Activated CD8-positive, alpha-beta memory T cell treated with anti-CD3 and anti-CD28 coated beads, Interleukin-2, amount 10 ng/mL, durations not matched to agents 7 days and 5 days (primary cell): ENCODE measurements at regions of chr10 and their contacts with region 1.

Region 1: GRCh38 chr10:103416436-103417147 is 20.2 kb downstream of the PDCD11 start:
- DNase-seq: peak; percentile 81
- ATAC-seq: peak; percentile 69
- H3K4me3 Mint-ChIP-seq: no peak overlapping the region
- H3K27ac Mint-ChIP-seq: peak overlapping the region; percentile 59
- H3K4me1 Mint-ChIP-seq: peaks cover 2% of the 10 kb centered on the region
- H3K27me3 Mint-ChIP-seq: no peaks in the 10 kb centered on the region

Region 2: GRCh38 chr10:103396064-103396788 is 20.4 kb before region 1 on chr10 and contains the starts of genes ATP5MK and PDCD11:
- CTCF ChIA-PET with region 1: interaction called, 10 read pairs
- DNase-seq: peak; percentile 98
- ATAC-seq: peak; percentile 99
- H3K4me3 Mint-ChIP-seq: peak within 1 kb of the TSS; percentile 98
- H3K27ac Mint-ChIP-seq: peak within 1 kb of the TSS; percentile 92
- H3K4me1 Mint-ChIP-seq: peaks cover 62% of the 10 kb centered on the region
- H3K27me3 Mint-ChIP-seq: no peaks in the 10 kb centered on the region
- total RNA-seq, gene ATP5MK: 274 to 387 TPM
- total RNA-seq, gene PDCD11: 59.4 to 67.7 TPM

Region 3: DNA sequence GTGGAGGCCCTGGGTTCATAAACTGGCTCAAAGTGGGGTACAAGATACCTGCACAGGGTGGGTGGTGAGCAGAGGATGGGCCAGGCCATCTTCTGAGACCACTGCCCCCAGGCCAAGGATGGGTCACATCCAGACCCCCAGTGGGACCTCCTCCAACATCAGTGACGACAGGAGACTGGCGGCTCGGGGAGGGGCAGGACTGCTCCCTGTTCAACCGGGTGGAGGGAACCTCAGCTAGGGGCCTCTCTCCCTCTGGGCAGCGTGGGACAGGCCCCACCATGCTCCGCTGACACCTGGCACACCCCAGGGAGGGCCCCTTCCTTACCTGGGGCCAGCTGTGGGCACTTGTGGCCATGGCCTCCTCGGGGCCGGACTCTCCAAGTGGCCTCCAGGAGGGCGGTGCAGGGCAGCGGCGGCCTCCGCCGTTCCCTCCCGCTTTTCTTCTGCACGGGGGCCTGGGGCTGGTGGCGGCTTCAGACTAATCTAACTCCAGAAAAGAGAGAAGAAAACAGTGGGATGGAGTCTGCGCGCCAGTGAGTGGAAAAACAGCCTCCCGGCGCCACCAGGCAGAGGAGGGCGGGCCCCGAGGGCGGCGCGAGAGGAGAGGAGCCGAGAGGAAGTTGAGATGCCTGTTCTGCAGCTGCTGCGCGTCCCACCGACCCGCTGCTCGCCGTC is 35.4 kb after region 1 on chr10 and contains the start of gene CALHM2:
- CTCF ChIA-PET with region 1: interaction called, 23 read pairs
- DNase-seq: peak; percentile 74
- ATAC-seq: peak; percentile 83
- H3K4me3 Mint-ChIP-seq: peak within 1 kb of the TSS; percentile 82
- H3K27ac Mint-ChIP-seq: peak within 1 kb of the TSS; percentile 89
- H3K4me1 Mint-ChIP-seq: peaks cover 56% of the 10 kb centered on the region
- H3K27me3 Mint-ChIP-seq: no peaks in the 10 kb centered on the region
- total RNA-seq, gene CALHM2: 65.6 to 93.4 TPM

Region 4: GRCh38 chr10:103470761-103471653 is 54.4 kb after region 1 on chr10:
- CTCF ChIA-PET with region 1: interaction called, 60 read pairs
- DNase-seq: peak; percentile 97
- ATAC-seq: peak; percentile 88
- H3K4me3 Mint-ChIP-seq: peak overlapping the region; percentile 68
- H3K27ac Mint-ChIP-seq: peak overlapping the region; percentile 97
- H3K4me1 Mint-ChIP-seq: peaks cover 65% of the 10 kb centered on the region
- H3K27me3 Mint-ChIP-seq: no peaks in the 10 kb centered on the region

Region 5: DNA sequence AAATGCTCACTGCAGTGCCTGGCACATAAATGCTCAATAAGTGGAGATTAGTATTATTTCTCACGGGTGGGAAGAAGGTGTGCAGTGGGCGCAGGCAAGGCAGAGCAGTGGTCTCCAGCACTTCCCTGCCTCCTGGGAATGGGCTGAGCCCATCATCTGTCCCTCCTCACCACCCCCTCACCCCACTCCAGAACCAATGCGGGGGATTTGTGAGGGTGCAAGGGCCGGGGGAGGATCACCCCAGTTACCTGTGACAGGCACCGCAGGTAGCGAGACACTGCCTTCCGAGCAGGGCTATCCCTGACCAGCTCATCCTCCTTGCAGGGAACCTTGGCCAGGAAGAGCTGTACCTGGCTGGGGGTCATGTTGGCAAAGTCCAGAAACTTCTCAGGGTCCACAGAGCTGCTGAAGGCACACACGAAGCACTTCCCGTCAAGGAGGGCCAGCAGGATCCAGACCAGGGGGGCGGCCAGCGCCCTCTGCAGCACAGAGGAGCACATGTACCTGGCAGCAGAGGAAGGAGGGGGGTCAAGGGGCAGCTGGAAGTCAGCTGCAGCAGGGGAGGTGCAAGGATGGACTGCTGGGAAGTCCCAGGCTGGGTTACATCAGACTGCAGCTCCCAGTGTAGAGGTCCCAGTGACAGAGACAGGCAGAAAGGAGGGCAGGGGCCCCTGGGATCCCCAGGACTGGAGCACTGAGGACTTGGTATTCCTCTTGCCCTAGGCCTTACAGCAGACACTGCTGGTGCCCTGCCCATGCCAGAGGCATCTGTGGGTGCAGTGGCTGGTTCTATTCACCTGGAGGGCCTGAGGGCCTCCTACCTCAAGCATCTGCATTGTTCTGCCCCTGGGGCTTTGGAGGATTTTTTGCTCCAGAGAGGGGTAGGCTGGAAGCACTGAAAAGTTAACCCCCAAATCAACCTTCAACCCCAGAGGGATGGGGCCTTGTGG is 59.7 kb after region 1 on chr10:
- CTCF ChIA-PET with region 1: interaction called, 60 read pairs
- DNase-seq: peak; percentile 58
- ATAC-seq: peak; percentile 40
- H3K4me3 Mint-ChIP-seq: no peak overlapping the region
- H3K27ac Mint-ChIP-seq: peak overlapping the region; percentile 14
- H3K4me1 Mint-ChIP-seq: peaks cover 38% of the 10 kb centered on the region
- H3K27me3 Mint-ChIP-seq: no peaks in the 10 kb centered on the region

Region 6: DNA sequence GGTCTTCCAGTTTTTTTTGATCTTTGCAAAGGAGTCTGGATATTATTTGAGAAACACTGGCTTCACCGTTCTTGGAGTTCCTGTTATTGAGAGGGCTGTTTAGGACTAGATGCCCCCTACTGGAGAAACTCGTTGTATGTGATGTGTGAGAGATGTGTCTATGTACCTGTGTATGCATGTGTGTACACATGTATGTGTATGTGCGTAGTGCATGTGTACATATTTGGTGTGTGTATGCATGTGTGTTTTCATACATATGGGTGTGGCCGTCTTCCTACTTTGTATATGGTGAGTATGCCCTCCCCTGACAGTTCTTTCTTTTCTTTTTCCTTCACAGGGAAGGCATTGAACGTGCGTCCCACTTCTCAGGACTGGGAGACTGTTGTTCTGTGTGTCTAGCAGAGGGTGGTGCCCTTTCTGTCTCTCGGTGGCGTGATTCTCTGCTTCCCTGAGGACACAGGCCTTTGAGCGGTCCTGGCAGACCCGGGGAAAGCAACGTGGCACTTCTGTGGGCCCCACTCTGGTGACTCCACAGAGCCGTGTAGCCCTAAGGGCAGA is 65.5 kb after region 1 on chr10:
- CTCF ChIA-PET with region 1: interaction called, 175 read pairs
- DNase-seq: no peak
- ATAC-seq: peak; percentile 87
- H3K4me3 Mint-ChIP-seq: no peak overlapping the region
- H3K27ac Mint-ChIP-seq: peak overlapping the region; percentile 37
- H3K4me1 Mint-ChIP-seq: peaks cover 14% of the 10 kb centered on the region
- H3K27me3 Mint-ChIP-seq: no peaks in the 10 kb centered on the region

Region 7: DNA sequence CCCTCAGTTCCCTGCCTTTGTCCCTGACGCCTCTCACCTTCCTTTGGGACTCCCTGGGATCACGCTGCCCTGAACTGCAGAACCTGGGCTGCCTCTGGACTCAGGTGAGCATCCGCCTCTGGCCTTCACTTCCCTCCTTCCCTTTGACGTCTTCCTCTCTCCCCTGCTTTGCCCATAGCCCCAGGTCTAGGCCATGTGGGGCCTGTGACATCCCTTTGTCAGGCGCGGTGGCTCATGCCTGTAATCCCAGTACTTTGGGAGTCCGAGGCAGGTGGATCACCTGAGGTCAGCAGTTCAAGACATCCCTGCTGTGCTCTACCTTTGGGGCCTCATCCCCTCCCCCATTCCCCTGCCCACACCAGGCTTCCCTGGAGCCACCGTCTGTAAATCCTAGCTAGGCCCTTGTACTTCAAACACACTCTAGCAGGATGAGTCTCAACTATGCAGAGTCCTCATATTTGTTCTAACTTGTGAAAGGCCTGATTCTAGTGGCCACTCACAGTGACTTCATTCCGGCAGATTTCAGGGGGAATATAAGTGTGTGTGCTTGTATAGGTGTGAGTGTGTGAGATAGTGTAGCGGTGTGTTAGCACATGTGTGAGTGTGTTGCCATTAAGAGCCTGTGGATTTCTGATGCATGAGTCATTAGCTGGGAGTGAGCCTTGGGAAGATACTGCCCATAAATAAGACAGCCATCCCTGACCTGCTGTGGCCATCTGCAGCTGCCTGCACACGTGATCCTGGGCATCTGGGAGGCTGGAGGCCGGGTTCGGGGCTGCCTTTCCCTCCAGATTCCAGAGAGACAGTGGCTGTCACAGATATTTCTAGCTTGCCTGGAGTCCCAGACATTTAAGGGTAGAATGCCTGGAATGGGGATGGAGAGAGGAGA is 75.1 kb after region 1 on chr10:
- CTCF ChIA-PET with region 1: interaction called, 175 read pairs
- DNase-seq: no peak
- ATAC-seq: no peak
- H3K4me3 Mint-ChIP-seq: no peak overlapping the region
- H3K27ac Mint-ChIP-seq: no peak overlapping the region
- H3K4me1 Mint-ChIP-seq: peaks cover 21% of the 10 kb centered on the region
- H3K27me3 Mint-ChIP-seq: peaks cover 42% of the 10 kb centered on the region

Region 8: GRCh38 chr10:103564776-103565520 is 148.4 kb after region 1 on chr10:
- CTCF ChIA-PET with region 1: no interaction called
- DNase-seq: peak; percentile 65
- ATAC-seq: peak; percentile 70
- H3K4me3 Mint-ChIP-seq: no peak overlapping the region
- H3K27ac Mint-ChIP-seq: no peak overlapping the region
- H3K4me1 Mint-ChIP-seq: no peaks in the 10 kb centered on the region
- H3K27me3 Mint-ChIP-seq: peaks cover 19% of the 10 kb centered on the region